GM13976 (cell line): ENCODE measurements at regions of chr2 and their contacts with region 1.

Region 1: DNA sequence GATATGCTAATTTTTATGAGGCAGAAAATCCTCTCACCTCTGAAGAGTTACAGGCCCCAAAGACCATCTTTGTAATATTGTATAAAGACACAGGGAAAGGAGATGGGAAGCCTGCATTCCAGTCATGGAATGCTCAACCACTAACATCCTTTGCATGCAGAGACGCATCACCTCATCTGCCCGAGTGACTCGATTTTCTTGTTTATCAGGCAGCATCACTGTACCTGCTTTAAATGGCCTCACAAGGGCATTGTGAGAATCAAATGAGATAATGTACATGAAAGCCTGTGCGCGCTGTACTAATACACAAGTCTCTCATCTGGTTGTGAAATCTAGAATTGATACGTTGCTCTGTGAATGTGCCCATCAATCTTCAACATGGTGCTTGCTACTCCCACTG is 10.2 kb upstream of the TMEM247 start:
- DNase-seq: no peak
- CTCF ChIP-seq: no peak

Region 2: DNA sequence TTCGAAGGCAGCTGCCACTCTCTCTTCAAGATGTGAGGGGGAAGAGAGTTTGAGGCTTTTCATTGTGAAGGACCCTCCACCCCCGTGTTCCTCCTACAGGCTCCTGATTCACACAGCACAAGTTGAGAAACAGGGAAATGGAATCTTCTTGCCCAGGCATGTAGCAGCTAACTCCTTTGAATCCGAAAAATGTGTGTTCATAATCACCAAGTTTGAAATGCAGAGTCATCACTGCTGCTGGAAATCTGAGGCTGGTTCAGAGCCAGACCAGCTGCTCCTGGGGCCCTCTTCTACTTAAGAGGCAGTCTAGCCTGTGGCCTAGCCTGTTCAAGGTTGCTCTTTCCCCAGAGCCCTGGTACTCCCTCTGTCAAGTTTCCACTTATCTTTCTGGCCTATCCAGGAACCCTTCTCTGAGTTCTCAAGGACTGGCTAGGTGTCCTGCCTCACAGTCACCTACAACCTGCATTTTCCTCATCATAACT is 176.6 kb after region 1 on chr2:
- in situ Hi-C with region 1: loop called (anchors 5 kb)
- DNase-seq: no peak
- CTCF ChIP-seq: no peak